Mammary epithelial cell (primary cell): ENCODE measurements at regions of chr4 and their contacts with region 1.

Region 1: GRCh38 chr4:12084690-12085089 is 656.0 kb upstream of the HS3ST1 start:
- DNase-seq: peak; percentile 28
- H3K4me3 ChIP-seq: no peak overlapping the region
- H3K27ac ChIP-seq: no peak overlapping the region
- H3K4me1 ChIP-seq: no peaks in the 10 kb centered on the region
- H3K27me3 ChIP-seq: no peaks in the 10 kb centered on the region
- CTCF ChIP-seq: no peak

Region 2: GRCh38 chr4:12118651-12119213 is 34.0 kb after region 1 on chr4:
- CTCF ChIA-PET with region 1: no interaction called
- dilution Hi-C with region 1: no loop called
- in situ Hi-C with region 1: no loop called
- intact Hi-C with region 1: loop called (anchors 2 kb)
- DNase-seq: peak; percentile 42
- H3K4me3 ChIP-seq: no peak overlapping the region
- H3K27ac ChIP-seq: no peak overlapping the region
- H3K4me1 ChIP-seq: no peaks in the 10 kb centered on the region
- H3K27me3 ChIP-seq: no peaks in the 10 kb centered on the region
- CTCF ChIP-seq: no peak

Region 3: GRCh38 chr4:12636191-12636590 is 551.5 kb after region 1 on chr4:
- CTCF ChIA-PET with region 1: no interaction called
- dilution Hi-C with region 1: no loop called
- in situ Hi-C with region 1: no loop called
- intact Hi-C with region 1: no loop called
- DNase-seq: no peak
- H3K4me3 ChIP-seq: no peak overlapping the region
- H3K27ac ChIP-seq: no peak overlapping the region
- H3K4me1 ChIP-seq: no peaks in the 10 kb centered on the region
- H3K27me3 ChIP-seq: no peaks in the 10 kb centered on the region
- CTCF ChIP-seq: no peak

Region 4: DNA sequence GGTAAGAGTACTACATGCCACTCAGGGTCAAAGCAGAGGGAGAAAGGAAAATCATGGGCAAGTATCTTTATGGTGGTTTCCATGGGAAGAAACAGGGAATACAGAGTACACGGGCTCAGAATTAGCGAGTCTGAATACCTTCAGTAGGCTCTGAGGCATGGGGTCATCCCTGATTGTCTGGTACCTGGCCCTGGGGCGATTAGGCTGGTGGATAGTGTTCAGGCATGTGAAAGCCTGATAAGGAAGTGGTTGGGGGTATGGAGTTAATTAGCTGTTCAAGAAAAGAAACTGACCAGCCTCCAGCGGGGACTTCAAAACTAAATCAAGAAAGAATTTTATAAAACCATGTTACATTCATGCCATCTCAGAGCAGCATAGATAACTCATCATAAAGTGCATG is 880.6 kb after region 1 on chr4:
- CTCF ChIA-PET with region 1: no interaction called
- dilution Hi-C with region 1: no loop called
- in situ Hi-C with region 1: no loop called
- intact Hi-C with region 1: no loop called
- DNase-seq: no peak
- H3K4me3 ChIP-seq: no peak overlapping the region
- H3K27ac ChIP-seq: no peak overlapping the region
- H3K4me1 ChIP-seq: no peaks in the 10 kb centered on the region
- H3K27me3 ChIP-seq: no peaks in the 10 kb centered on the region
- CTCF ChIP-seq: no peak